CD4-positive, alpha-beta memory T cell (primary cell): ENCODE measurements at regions of chr1 and their contacts with region 1.

Region 1: DNA sequence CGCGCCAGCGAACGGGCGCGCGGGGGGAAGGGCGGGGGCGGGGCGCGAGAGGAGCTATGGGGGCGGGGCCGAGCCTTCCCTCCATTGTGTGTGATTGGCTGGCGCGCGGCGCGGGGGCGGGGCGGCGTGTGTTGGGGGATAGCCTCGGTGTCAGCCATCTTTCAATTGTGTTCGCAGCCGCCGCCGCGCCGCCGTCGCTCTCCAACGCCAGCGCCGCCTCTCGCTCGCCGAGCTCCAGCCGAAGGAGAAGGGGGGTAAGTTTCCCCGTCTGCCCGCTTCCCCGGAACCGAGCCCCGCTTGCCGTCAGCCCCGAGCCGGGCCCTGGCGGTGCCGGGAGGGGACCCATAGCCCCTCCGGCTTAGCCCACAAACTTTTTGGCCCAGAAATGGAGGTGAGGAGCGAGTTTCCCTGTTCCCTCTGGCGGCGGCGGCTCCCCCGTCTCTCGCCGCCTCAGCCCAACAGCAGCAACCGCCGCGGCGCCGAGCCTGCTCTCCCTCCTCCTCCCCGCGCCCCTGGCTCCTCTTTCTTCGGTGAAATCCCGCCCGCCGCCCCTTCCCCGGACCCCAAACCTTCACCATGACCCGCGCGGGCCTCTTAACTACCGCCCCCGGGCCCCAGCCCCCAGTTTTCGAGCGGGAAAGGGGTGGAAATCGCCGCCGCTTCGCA is at the start of gene H3-3A:
- DNase-seq: peak; percentile 98
- H3K4me3 ChIP-seq: peak within 1 kb of the TSS; percentile 77 to 84
- H3K4me3 Mint-ChIP-seq: peak within 1 kb of the TSS; percentile 99 to 100 (median 100)
- H3K27ac ChIP-seq: peak within 1 kb of the TSS; percentile 89
- H3K27ac Mint-ChIP-seq: peak within 1 kb of the TSS; percentile 96 to 100 (median 99)
- H3K4me1 ChIP-seq: peaks cover 47% of the 10 kb centered on the region
- H3K4me1 Mint-ChIP-seq: peaks cover 31 to 63% (median 43%) of the 10 kb centered on the region in 4 donors
- H3K27me3 ChIP-seq: no peaks in the 10 kb centered on the region
- H3K27me3 Mint-ChIP-seq: peaks cover 0 to 2% of the 10 kb centered on the region in 2 donors
- total RNA-seq, gene H3-3A: 391 to 397 TPM

Region 2: DNA sequence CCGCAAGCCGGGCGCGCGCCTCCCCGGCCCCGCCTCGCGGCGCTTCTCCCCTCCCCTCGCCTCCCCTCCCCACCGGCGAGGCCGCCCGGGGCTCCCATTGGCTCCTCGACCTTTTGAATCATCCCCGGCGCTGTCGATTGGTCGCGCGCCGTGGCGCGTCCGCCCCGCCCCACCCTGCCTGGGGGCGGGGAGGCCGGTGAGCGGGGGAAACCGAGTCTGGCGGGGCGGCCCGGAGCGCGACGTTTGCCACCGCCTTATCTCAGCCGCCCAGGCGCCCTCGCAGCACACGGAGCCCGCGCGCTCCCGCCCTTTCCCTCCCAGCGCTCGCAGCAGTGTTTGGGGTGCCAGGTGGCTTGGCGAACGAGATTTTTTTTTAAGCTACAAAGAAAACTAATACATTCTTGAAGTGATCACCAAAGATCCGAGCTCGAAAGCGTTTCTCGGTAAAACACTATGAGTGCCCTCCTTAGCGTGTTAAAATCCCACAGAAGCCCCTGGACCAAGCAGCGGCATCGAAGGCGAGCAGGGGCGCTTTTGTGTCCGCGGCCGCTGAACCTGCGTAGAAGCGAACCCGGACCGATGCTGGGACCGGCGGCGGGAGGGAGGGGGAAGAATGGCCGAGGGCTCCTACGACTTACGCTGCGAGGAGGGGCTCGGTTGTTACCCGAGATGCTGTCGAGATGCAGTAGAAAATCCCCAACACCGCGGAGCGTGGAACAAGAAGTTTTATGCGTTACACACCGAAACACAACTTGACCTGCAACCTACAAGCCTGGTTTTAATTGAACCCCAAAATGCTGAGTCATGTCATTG is 634.4 kb before region 1 on chr1:
- CTCF ChIA-PET with region 1: no interaction called
- POLR2A ChIA-PET with region 1: interaction called, 23 read pairs
- intact Hi-C with region 1: loop called (anchors 1 kb)
- DNase-seq: peak; percentile 91 to 92 (median 91)
- H3K4me3 ChIP-seq: peak overlapping the region; percentile 68 to 75
- H3K4me3 Mint-ChIP-seq: peak overlapping the region; percentile 84 to 97 (median 92)
- H3K27ac ChIP-seq: peak overlapping the region; percentile 78
- H3K27ac Mint-ChIP-seq: peak overlapping the region; percentile 86 to 97 (median 96)
- H3K4me1 ChIP-seq: peaks cover 41% of the 10 kb centered on the region
- H3K4me1 Mint-ChIP-seq: peaks cover 38 to 49% (median 44%) of the 10 kb centered on the region in 4 donors
- H3K27me3 ChIP-seq: no peaks in the 10 kb centered on the region
- H3K27me3 Mint-ChIP-seq: no peaks in the 10 kb centered on the region

Region 3: GRCh38 chr1:225881969-225882693 is 180.6 kb before region 1 on chr1 and contains the start of gene TMEM63A:
- CTCF ChIA-PET with region 1: no interaction called
- POLR2A ChIA-PET with region 1: interaction called, 29 read pairs
- intact Hi-C with region 1: loop called (anchors 5 kb)
- DNase-seq: peak; percentile 86 to 92 (median 88)
- H3K4me3 ChIP-seq: peak within 1 kb of the TSS; percentile 89 to 98
- H3K4me3 Mint-ChIP-seq: peak within 1 kb of the TSS; percentile 95 to 99 (median 98)
- H3K27ac ChIP-seq: peak within 1 kb of the TSS; percentile 84
- H3K27ac Mint-ChIP-seq: peak within 1 kb of the TSS; percentile 93 to 97 (median 96)
- H3K4me1 ChIP-seq: peaks cover 48% of the 10 kb centered on the region
- H3K4me1 Mint-ChIP-seq: peaks cover 37 to 57% (median 46%) of the 10 kb centered on the region in 4 donors
- H3K27me3 ChIP-seq: no peaks in the 10 kb centered on the region
- H3K27me3 Mint-ChIP-seq: no peaks in the 10 kb centered on the region
- total RNA-seq, gene TMEM63A: 476 to 507 TPM

Region 4: GRCh38 chr1:225987491-225988316 is 75.0 kb before region 1 on chr1:
- CTCF ChIA-PET with region 1: interaction called, 26 read pairs
- POLR2A ChIA-PET with region 1: interaction called, 614 read pairs
- intact Hi-C with region 1: no loop called
- DNase-seq: peak in 4 of 5 donors; percentile 27 to 45 (median 40)
- H3K4me3 ChIP-seq: no peak overlapping the region
- H3K4me3 Mint-ChIP-seq: no peak overlapping the region
- H3K27ac ChIP-seq: no peak overlapping the region
- H3K27ac Mint-ChIP-seq: peak overlapping the region in 5 of 7 donors; percentile 37 to 80 (median 51)
- H3K4me1 ChIP-seq: peaks cover 19% of the 10 kb centered on the region
- H3K4me1 Mint-ChIP-seq: peaks cover 17 to 37% (median 27%) of the 10 kb centered on the region in 4 donors
- H3K27me3 ChIP-seq: no peaks in the 10 kb centered on the region
- H3K27me3 Mint-ChIP-seq: no peaks in the 10 kb centered on the region

Region 5: GRCh38 chr1:226074046-226074445 is 11.4 kb after region 1 on chr1:
- CTCF ChIA-PET with region 1: interaction called, 53 read pairs
- POLR2A ChIA-PET with region 1: interaction called, 22 read pairs
- intact Hi-C with region 1: loop called (anchors 1 kb)
- DNase-seq: no peak
- H3K4me3 ChIP-seq: no peak overlapping the region
- H3K4me3 Mint-ChIP-seq: no peak overlapping the region
- H3K27ac ChIP-seq: no peak overlapping the region
- H3K27ac Mint-ChIP-seq: peak overlapping the region in 4 of 7 donors; percentile 5 to 20 (median 14)
- H3K4me1 ChIP-seq: peaks cover 16% of the 10 kb centered on the region
- H3K4me1 Mint-ChIP-seq: peaks cover 7 to 25% (median 18%) of the 10 kb centered on the region in 4 donors
- H3K27me3 ChIP-seq: no peaks in the 10 kb centered on the region
- H3K27me3 Mint-ChIP-seq: no peaks in the 10 kb centered on the region

Region 6: GRCh38 chr1:226121587-226122400 is 59.1 kb after region 1 on chr1:
- CTCF ChIA-PET with region 1: interaction called, 95 read pairs
- POLR2A ChIA-PET with region 1: interaction called, 63 read pairs
- intact Hi-C with region 1: loop called (anchors 1 kb)
- DNase-seq: peak; percentile 75 to 85 (median 80)
- H3K4me3 ChIP-seq: peak overlapping the region in 1 of 2 donors; percentile 58
- H3K4me3 Mint-ChIP-seq: peak overlapping the region in 7 of 8 donors; percentile 48 to 89 (median 69)
- H3K27ac ChIP-seq: peak overlapping the region; percentile 68
- H3K27ac Mint-ChIP-seq: peak overlapping the region in 5 of 7 donors; percentile 48 to 93 (median 74)
- H3K4me1 ChIP-seq: peaks cover 29% of the 10 kb centered on the region
- H3K4me1 Mint-ChIP-seq: peaks cover 18 to 35% (median 27%) of the 10 kb centered on the region in 4 donors
- H3K27me3 ChIP-seq: no peaks in the 10 kb centered on the region
- H3K27me3 Mint-ChIP-seq: no peaks in the 10 kb centered on the region

Region 7: DNA sequence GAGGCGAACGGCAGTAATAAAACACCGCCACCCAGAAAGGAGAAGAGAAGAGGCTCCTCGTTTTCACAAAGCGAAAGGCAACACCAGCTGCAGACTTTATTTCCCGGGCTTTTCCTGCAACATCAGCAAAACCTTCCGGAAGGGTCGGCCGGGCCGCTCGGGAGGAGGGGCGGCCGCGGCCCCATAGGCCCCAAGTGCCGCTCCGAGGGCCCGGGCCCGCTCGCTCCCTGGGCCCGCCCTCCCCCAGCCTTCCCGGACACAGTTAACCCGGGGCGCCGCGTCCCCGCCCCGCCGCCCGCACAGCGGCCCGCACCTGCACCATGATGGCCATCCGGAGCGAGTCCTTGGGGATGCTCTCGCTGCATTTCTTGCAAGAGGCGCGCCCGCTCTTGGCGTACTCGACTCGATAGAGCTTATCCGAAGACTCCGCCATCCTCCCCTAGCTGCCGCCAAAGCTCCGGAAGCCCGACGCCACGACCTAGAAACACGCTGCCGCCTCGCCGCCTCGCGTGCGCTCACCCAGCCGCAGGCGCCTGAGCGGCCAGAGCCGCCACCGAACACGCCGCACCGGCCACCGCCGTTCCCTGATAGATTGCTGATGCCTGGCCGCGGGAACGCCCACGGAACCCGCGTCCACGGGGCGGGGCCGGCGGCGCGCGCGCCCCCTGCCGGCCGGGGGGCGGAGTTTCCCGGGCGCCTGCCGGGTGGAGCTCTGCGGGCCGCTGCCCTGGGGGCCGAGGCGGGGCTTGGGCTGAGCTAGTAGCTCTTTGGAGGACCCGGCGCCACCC is 345.0 kb after region 1 on chr1 and contains the start of gene PARP1:
- CTCF ChIA-PET with region 1: interaction called, 4 read pairs
- POLR2A ChIA-PET with region 1: interaction called, 22 read pairs
- intact Hi-C with region 1: no loop called
- DNase-seq: peak; percentile 91 to 94 (median 91)
- H3K4me3 ChIP-seq: peak within 1 kb of the TSS; percentile 68 to 83
- H3K4me3 Mint-ChIP-seq: peak within 1 kb of the TSS; percentile 94 to 99 (median 98)
- H3K27ac ChIP-seq: peak within 1 kb of the TSS; percentile 76
- H3K27ac Mint-ChIP-seq: peak within 1 kb of the TSS; percentile 94 to 98 (median 96)
- H3K4me1 ChIP-seq: peaks cover 46% of the 10 kb centered on the region
- H3K4me1 Mint-ChIP-seq: peaks cover 32 to 60% (median 43%) of the 10 kb centered on the region in 4 donors
- H3K27me3 ChIP-seq: no peaks in the 10 kb centered on the region
- H3K27me3 Mint-ChIP-seq: no peaks in the 10 kb centered on the region
- total RNA-seq, gene PARP1: 120 to 129 TPM